CD8-positive, alpha-beta memory T cell (primary cell): ENCODE measurements at regions of chr4 and their contacts with region 1.

Region 1: DNA sequence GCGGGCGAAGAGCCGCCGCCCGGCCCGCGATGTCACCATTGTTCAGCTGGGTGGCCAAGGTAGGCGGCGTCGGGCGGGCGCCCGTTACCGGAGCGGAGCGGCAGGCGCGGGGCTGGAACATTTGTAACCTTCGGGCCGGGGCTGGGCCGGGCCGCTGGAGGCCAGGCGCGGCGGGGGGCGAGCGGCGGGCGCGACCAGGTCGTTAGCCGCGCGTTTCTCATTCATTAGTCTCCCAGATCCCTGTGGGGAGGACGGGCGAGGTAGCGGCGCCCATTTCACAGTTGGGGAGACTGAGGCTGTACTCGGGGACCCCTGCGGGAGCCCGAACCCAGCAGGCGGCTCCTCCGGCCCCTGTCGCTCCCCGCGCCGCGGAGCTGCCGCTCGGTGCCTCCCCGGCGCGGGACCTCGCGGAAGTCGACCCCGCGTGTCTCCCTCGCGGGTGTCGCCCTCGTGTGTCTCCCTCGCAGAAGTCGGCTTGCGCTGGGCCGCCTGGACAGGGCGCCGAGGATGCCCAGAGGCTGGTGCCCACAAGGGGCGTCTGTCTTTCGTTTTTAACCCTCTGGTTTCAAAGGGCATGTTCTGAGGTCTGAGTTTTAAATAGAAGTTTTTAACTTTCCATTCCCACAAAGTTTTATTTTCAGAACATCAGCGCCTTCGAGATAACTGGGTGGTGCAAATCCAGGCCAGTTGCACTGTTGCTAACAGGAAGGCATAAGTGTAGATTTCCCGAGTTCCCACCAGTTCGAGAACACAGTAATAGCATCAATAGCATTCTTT is 17.5 kb downstream of the PTTG2 start:
- DNase-seq: peak; percentile 67 to 83 (median 70)
- H3K4me3 ChIP-seq: peak overlapping the region; percentile 72
- H3K4me3 Mint-ChIP-seq: peak overlapping the region; percentile 84 to 95 (median 87)
- H3K27ac ChIP-seq: peak overlapping the region; percentile 61
- H3K27ac Mint-ChIP-seq: peak overlapping the region; percentile 47 to 96 (median 90)
- H3K4me1 ChIP-seq: peaks cover 17% of the 10 kb centered on the region
- H3K4me1 Mint-ChIP-seq: peaks cover 31 to 46% (median 39%) of the 10 kb centered on the region in 3 donors
- H3K27me3 ChIP-seq: no peaks in the 10 kb centered on the region
- H3K27me3 Mint-ChIP-seq: no peaks in the 10 kb centered on the region

Region 2: GRCh38 chr4:38461342-38461741 is 483.7 kb after region 1 on chr4:
- CTCF ChIA-PET with region 1: no interaction called
- POLR2A ChIA-PET with region 1: interaction called, 10 read pairs
- DNase-seq: no peak
- H3K4me3 ChIP-seq: no peak overlapping the region
- H3K4me3 Mint-ChIP-seq: no peak overlapping the region
- H3K27ac ChIP-seq: no peak overlapping the region
- H3K27ac Mint-ChIP-seq: no peak overlapping the region
- H3K4me1 ChIP-seq: peaks cover 11% of the 10 kb centered on the region
- H3K4me1 Mint-ChIP-seq: peaks cover 11 to 14% (median 11%) of the 10 kb centered on the region in 3 donors
- H3K27me3 ChIP-seq: no peaks in the 10 kb centered on the region
- H3K27me3 Mint-ChIP-seq: peaks cover 0 to 2% of the 10 kb centered on the region in 2 donors